ENCODE measurements at regions of chr7 and their contacts with region 1.

Region 1: DNA sequence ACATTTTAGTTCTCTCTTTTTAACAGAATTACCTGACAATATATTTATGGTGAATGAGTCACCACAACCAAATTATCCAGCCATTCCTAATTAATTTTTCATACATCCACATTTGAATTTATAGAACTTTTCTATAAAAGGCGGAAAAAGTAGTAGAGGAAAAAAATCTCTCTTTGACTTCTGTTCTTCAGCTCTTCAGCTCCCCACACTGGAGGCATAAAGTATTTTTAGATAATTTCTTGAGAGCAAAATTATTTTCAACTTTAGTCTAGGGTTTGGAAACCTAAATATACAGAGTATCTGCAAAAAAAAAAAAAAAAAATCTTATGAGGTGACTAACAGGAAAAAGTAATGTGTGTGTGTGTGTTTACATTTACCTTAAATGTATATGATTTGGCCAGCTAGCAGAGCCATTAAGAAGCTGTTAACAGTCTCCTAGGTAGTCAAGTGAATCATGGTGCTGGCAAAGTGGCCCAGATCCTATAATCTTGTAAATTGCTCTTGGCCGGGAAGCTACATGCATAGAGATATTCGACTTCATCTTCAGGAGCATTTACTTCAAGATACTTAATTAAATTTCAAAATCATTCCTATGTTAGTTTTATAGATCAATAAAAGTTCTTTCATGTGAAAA is 383.1 kb upstream of the STEAP1 start:
- DNase-seq: no peak
- H3K4me3 ChIP-seq: no peak overlapping the region
- H3K4me3 Mint-ChIP-seq: no peak overlapping the region
- H3K27ac ChIP-seq: no peak overlapping the region
- H3K27ac Mint-ChIP-seq: no peak overlapping the region
- H3K4me1 ChIP-seq: no peaks in the 10 kb centered on the region
- H3K4me1 Mint-ChIP-seq: no peaks in the 10 kb centered on the region
- H3K27me3 ChIP-seq: no peaks in the 10 kb centered on the region
- H3K27me3 Mint-ChIP-seq: no peaks in the 10 kb centered on the region

Region 2: GRCh38 chr7:88789480-88790064 is 981.5 kb before region 1 on chr7:
- CTCF ChIA-PET with region 1: no interaction called
- POLR2A ChIA-PET with region 1: no interaction called
- intact Hi-C with region 1: loop called (anchors 2 kb)
- DNase-seq: peak in 4 of 5 donors; percentile 6 to 20 (median 12)
- H3K4me3 ChIP-seq: no peak overlapping the region
- H3K4me3 Mint-ChIP-seq: no peak overlapping the region
- H3K27ac ChIP-seq: no peak overlapping the region
- H3K27ac Mint-ChIP-seq: no peak overlapping the region
- H3K4me1 ChIP-seq: no peaks in the 10 kb centered on the region
- H3K4me1 Mint-ChIP-seq: no peaks in the 10 kb centered on the region
- H3K27me3 ChIP-seq: no peaks in the 10 kb centered on the region
- H3K27me3 Mint-ChIP-seq: no peaks in the 10 kb centered on the region

Region 3: DNA sequence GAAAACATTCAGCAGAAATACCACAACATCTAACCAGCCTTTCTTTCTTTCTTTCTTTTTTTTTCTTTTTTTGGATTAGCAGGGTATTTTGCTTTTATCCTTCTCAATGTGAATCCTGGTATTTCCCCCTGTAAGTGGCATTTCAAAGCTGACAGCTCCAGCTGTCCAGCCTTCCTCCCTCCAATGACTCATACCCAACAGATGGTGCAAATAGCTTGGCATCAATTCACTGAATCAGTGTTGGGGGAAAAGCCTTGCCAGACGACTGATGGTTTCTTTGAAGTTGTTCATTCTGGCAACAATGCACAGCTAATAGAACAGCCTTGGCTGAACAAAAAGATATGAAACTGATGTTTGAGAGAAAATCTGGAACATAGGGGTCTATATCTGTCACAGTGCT is 66.4 kb after region 1 on chr7:
- CTCF ChIA-PET with region 1: no interaction called
- POLR2A ChIA-PET with region 1: no interaction called
- intact Hi-C with region 1: no loop called
- DNase-seq: no peak
- H3K4me3 ChIP-seq: no peak overlapping the region
- H3K4me3 Mint-ChIP-seq: no peak overlapping the region
- H3K27ac ChIP-seq: no peak overlapping the region
- H3K27ac Mint-ChIP-seq: no peak overlapping the region
- H3K4me1 ChIP-seq: no peaks in the 10 kb centered on the region
- H3K4me1 Mint-ChIP-seq: no peaks in the 10 kb centered on the region
- H3K27me3 ChIP-seq: no peaks in the 10 kb centered on the region
- H3K27me3 Mint-ChIP-seq: no peaks in the 10 kb centered on the region

Region 4: DNA sequence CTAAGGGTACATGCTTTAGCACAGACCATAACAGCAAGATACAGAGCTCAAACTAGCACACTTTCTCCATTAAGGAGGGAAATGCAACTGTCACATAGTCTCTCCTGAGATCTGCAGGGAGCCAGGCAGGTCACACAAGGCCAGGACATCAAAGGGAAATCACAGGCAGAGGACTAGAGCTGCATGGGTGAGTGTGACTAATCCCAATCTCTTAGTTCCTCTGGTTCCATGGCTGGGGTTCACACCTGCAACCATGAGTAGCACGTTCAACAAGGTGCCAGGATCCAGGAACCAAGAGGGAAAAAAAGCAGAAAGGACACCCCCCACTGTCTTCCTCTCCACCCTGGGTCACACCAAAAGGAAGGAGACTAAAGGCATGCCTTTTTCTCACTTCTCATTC is 86.6 kb after region 1 on chr7:
- CTCF ChIA-PET with region 1: no interaction called
- POLR2A ChIA-PET with region 1: no interaction called
- intact Hi-C with region 1: no loop called
- DNase-seq: no peak
- H3K4me3 ChIP-seq: no peak overlapping the region
- H3K4me3 Mint-ChIP-seq: no peak overlapping the region
- H3K27ac ChIP-seq: no peak overlapping the region
- H3K27ac Mint-ChIP-seq: no peak overlapping the region
- H3K4me1 ChIP-seq: no peaks in the 10 kb centered on the region
- H3K4me1 Mint-ChIP-seq: no peaks in the 10 kb centered on the region
- H3K27me3 ChIP-seq: no peaks in the 10 kb centered on the region
- H3K27me3 Mint-ChIP-seq: no peaks in the 10 kb centered on the region